ENCODE measurements at regions of chr5 and their contacts with region 1.

Region 1: DNA sequence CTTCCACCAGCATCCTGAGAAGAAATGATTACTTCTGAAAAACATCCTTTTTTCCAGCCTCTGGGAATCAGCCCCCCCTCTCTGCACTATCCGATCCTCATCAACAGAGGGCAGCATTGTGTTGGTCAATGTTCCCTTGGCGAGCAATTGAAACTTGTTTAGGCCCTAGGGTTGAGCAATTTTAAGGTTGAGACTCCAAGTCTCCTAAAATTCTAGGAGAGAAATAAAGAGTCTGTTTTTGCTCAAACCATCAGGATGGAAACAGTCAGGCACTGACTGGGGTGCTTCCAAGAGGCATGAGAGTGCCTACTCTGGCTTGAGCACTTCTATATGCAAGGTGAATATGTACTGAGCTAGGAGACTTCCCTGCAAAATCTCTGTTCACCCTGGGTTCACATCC is 12.4 kb upstream of the CYFIP2 start:
- DNase-seq: peak in 1 of 2 donors; percentile 68
- ATAC-seq: peak; percentile 19 to 54 (median 30)
- H3K4me3 ChIP-seq: no peak overlapping the region
- H3K4me3 Mint-ChIP-seq: peak overlapping the region; percentile 81
- H3K27ac ChIP-seq: peak overlapping the region; percentile 88
- H3K27ac Mint-ChIP-seq: peak overlapping the region; percentile 92 to 97
- H3K4me1 ChIP-seq: peaks cover 55% of the 10 kb centered on the region
- H3K4me1 Mint-ChIP-seq: peaks cover 90% of the 10 kb centered on the region in 2 donors
- H3K27me3 ChIP-seq: no peaks in the 10 kb centered on the region
- H3K27me3 Mint-ChIP-seq: no peaks in the 10 kb centered on the region
- CTCF ChIP-seq: peak; percentile 63

Region 2: GRCh38 chr5:155649666-155650065 is 1603.9 kb before region 1 on chr5:
- intact Hi-C with region 1: no loop called
- DNase-seq: no peak
- ATAC-seq: no peak
- H3K4me3 ChIP-seq: no peak overlapping the region
- H3K4me3 Mint-ChIP-seq: no peak overlapping the region
- H3K27ac ChIP-seq: no peak overlapping the region
- H3K27ac Mint-ChIP-seq: no peak overlapping the region
- H3K4me1 ChIP-seq: no peaks in the 10 kb centered on the region
- H3K4me1 Mint-ChIP-seq: no peaks in the 10 kb centered on the region
- H3K27me3 ChIP-seq: no peaks in the 10 kb centered on the region
- H3K27me3 Mint-ChIP-seq: peaks cover 0 to 2% of the 10 kb centered on the region in 2 donors
- CTCF ChIP-seq: no peak

Region 3: DNA sequence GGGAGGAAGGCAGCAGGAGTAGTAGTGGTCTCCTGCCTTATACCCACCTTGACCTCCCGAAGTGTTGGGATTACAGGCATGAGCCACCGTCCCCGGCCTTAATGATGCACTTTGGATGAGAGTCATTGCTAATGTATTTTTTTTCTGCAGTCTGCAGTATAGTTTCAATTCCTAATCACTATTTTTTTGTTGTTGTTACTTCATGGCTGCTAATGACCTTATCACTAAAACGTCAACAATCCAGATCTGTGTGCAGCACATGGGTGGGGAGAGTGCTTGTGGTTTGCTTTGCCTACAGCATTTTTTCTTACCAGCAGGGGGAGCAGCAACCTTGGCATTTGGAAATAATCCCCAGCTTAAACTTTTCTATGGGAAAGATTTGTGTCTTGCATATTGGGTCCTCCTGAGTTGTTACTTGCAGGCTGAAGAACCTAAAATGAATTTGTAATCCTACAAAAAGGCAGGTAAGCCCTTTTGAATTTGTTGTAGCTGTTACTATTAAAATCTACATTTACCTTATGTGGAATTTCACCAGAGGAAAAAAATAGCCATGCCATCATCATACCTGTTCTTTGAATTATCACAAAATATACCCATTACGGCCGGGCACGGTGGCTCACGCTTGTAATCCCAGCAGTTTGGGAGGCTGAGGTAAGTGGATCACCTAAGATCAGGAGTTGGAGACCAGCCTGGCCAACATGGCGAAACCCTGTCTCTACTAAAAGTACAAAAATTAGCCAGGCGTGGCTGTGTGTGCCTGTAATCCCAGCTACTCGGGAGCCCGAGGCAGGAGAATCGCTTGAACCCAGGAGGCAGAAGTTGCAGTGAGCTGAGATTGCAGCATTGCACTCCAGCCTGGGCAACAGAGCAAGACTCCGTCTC is 104.6 kb before region 1 on chr5:
- intact Hi-C with region 1: loop called (anchors 1 kb)
- DNase-seq: peak; percentile 66 to 93
- ATAC-seq: peak; percentile 95 to 97 (median 97)
- H3K4me3 ChIP-seq: no peak overlapping the region
- H3K4me3 Mint-ChIP-seq: no peak overlapping the region
- H3K27ac ChIP-seq: no peak overlapping the region
- H3K27ac Mint-ChIP-seq: peak overlapping the region; percentile 88 to 93
- H3K4me1 ChIP-seq: peaks cover 8% of the 10 kb centered on the region
- H3K4me1 Mint-ChIP-seq: peaks cover 16 to 19% of the 10 kb centered on the region in 2 donors
- H3K27me3 ChIP-seq: no peaks in the 10 kb centered on the region
- H3K27me3 Mint-ChIP-seq: no peaks in the 10 kb centered on the region
- CTCF ChIP-seq: peak; percentile 86

Region 4: DNA sequence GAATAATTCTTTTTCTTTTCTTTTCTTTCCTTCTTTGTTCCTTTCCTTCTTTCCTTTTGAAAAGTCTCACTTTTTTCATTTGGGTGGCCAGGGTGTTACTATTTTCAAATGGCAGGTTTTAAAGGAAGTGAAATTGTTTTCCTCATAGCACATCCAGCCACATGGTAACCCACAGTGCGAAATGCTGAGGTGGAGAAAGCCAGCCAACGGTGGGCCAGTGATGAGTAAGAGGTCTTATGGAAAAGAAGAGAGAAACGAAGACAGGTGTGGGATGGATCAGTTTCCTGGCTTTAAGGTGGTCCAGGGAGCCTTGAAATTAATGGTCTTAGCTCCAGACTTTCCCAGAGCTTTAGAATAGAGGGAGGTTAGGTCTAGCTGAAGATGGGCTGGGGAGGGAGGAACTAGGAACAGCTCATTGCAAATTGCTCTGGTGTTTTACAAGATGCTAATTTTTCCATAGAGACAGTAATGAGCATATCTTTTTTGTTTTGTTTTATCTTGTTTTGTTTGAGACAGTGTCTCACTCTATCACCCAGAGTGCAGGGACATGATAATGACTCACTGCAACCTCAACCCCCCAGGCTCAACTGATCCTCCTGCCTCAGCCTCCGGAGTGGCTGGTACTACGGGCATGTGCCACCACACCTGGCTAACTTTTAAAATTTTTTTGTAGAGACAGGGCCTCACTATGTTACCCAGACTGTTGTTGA is 55.1 kb before region 1 on chr5:
- intact Hi-C with region 1: loop called (anchors 5 kb)
- DNase-seq: peak; percentile 53 to 74
- ATAC-seq: peak; percentile 57 to 70 (median 66)
- H3K4me3 ChIP-seq: no peak overlapping the region
- H3K4me3 Mint-ChIP-seq: peak overlapping the region; percentile 73
- H3K27ac ChIP-seq: peak overlapping the region; percentile 48
- H3K27ac Mint-ChIP-seq: peak overlapping the region; percentile 82 to 97
- H3K4me1 ChIP-seq: peaks cover 70% of the 10 kb centered on the region
- H3K4me1 Mint-ChIP-seq: peaks cover 82 to 85% of the 10 kb centered on the region in 2 donors
- H3K27me3 ChIP-seq: no peaks in the 10 kb centered on the region
- H3K27me3 Mint-ChIP-seq: no peaks in the 10 kb centered on the region
- CTCF ChIP-seq: no peak

Region 5: GRCh38 chr5:157265714-157266285 is 12.3 kb after region 1 on chr5 and contains the start of gene CYFIP2:
- intact Hi-C with region 1: loop called (anchors 1 kb)
- DNase-seq: peak; percentile 79 to 94
- ATAC-seq: peak; percentile 87 to 94 (median 90)
- H3K4me3 ChIP-seq: peak within 1 kb of the TSS; percentile 62
- H3K4me3 Mint-ChIP-seq: peak within 1 kb of the TSS; percentile 92
- H3K27ac ChIP-seq: peak within 1 kb of the TSS; percentile 90
- H3K27ac Mint-ChIP-seq: peak within 1 kb of the TSS; percentile 98 to 99
- H3K4me1 ChIP-seq: peaks cover 57% of the 10 kb centered on the region
- H3K4me1 Mint-ChIP-seq: peaks cover 70% of the 10 kb centered on the region in 2 donors
- H3K27me3 ChIP-seq: no peaks in the 10 kb centered on the region
- H3K27me3 Mint-ChIP-seq: no peaks in the 10 kb centered on the region
- CTCF ChIP-seq: no peak
- total RNA-seq, gene CYFIP2: 464 to 542 (median 532) TPM

Region 6: GRCh38 chr5:157290981-157291711 is 37.6 kb after region 1 on chr5:
- intact Hi-C with region 1: loop called (anchors 5 kb)
- DNase-seq: peak in 1 of 2 donors; percentile 47
- ATAC-seq: peak; percentile 48 to 50 (median 49)
- H3K4me3 ChIP-seq: no peak overlapping the region
- H3K4me3 Mint-ChIP-seq: peak overlapping the region; percentile 25
- H3K27ac ChIP-seq: peak overlapping the region; percentile 2
- H3K27ac Mint-ChIP-seq: peak overlapping the region; percentile 71 to 75
- H3K4me1 ChIP-seq: peaks cover 13% of the 10 kb centered on the region
- H3K4me1 Mint-ChIP-seq: peaks cover 68 to 73% of the 10 kb centered on the region in 2 donors
- H3K27me3 ChIP-seq: no peaks in the 10 kb centered on the region
- H3K27me3 Mint-ChIP-seq: no peaks in the 10 kb centered on the region
- CTCF ChIP-seq: no peak

Measured in natural killer cell (primary cell).